SK-N-SH (cell line): ENCODE measurements at regions of chr21 and their contacts with region 1.

Region 1: GRCh38 chr21:43728467-43729390 is 9.8 kb downstream of the PDXK start:
- DNase-seq: peak; percentile 95
- H3K4me3 ChIP-seq: peak overlapping the region; percentile 65 to 91
- H3K27ac ChIP-seq: peak overlapping the region; percentile 88
- H3K4me1 ChIP-seq: peaks cover 24 to 36% of the 10 kb centered on the region in 2 experiments; a peak in 3 of 4 replicates
- H3K27me3 ChIP-seq: no peaks in the 10 kb centered on the region
- CTCF ChIP-seq: peak; percentile 39
- EP300 ChIP-seq: peak; percentile 45 to 66; a peak in 2 of 4 replicates
- RAD21 ChIP-seq: no peak

Region 2: DNA sequence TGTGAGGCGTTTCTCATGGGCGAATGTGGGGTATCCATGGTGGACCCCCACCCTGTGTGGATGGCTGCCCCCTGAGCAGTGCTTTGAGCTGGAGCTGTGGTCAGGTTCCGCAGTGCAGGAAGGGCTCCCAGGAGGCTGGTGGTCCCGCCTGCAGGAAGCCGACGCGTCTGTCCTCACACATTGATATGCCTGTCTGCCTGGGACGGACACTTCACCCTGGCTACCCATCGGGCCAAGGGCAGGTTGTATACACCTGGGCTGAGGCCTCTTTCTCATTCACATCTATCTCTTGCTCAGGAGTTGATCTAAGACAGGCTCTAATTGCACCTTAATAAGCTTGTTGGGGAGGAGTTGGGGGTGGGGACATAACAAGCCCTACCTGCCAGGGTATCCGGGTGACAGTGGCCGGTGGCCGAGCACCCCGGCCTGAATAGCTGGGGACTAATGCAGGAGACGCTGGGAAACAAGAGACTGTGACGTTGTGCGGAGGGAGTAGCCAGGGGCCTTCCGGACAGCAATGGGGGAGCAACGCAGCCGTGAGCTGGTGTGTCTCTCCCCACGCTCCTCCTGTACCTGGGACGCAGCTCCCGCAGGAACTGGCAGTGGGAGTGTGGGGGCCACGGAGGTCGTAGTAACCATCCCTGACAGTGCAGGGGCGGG is 11.9 kb after region 1 on chr21:
- CTCF ChIA-PET with region 1: interaction called, 4 read pairs
- POLR2A ChIA-PET with region 1: interaction called, 10 read pairs
- DNase-seq: peak; percentile 89
- H3K4me3 ChIP-seq: no peak overlapping the region
- H3K27ac ChIP-seq: peak overlapping the region; percentile 24 to 27; a peak in 2 of 4 replicates
- H3K4me1 ChIP-seq: peaks cover 0 to 3% of the 10 kb centered on the region in 2 experiments; a peak in 1 of 4 replicates
- H3K27me3 ChIP-seq: no peaks in the 10 kb centered on the region
- CTCF ChIP-seq: no peak
- EP300 ChIP-seq: no peak
- RAD21 ChIP-seq: no peak

Region 3: GRCh38 chr21:43866260-43866629 is 137.5 kb after region 1 on chr21:
- CTCF ChIA-PET with region 1: no interaction called
- POLR2A ChIA-PET with region 1: no interaction called
- DNase-seq: peak; percentile 83
- H3K4me3 ChIP-seq: peak overlapping the region; percentile 81 to 90
- H3K27ac ChIP-seq: peak overlapping the region; percentile 71 to 76
- H3K4me1 ChIP-seq: peaks cover 8 to 14% of the 10 kb centered on the region in 2 experiments; a peak in 2 of 4 replicates
- H3K27me3 ChIP-seq: no peaks in the 10 kb centered on the region
- CTCF ChIP-seq: no peak
- EP300 ChIP-seq: no peak
- RAD21 ChIP-seq: no peak